Activated naive CD4-positive, alpha-beta T cell treated with anti-CD3 and anti-CD28 coated beads for 36 hours (primary cell): ENCODE measurements at regions of chr11 and their contacts with region 1.

Region 1: DNA sequence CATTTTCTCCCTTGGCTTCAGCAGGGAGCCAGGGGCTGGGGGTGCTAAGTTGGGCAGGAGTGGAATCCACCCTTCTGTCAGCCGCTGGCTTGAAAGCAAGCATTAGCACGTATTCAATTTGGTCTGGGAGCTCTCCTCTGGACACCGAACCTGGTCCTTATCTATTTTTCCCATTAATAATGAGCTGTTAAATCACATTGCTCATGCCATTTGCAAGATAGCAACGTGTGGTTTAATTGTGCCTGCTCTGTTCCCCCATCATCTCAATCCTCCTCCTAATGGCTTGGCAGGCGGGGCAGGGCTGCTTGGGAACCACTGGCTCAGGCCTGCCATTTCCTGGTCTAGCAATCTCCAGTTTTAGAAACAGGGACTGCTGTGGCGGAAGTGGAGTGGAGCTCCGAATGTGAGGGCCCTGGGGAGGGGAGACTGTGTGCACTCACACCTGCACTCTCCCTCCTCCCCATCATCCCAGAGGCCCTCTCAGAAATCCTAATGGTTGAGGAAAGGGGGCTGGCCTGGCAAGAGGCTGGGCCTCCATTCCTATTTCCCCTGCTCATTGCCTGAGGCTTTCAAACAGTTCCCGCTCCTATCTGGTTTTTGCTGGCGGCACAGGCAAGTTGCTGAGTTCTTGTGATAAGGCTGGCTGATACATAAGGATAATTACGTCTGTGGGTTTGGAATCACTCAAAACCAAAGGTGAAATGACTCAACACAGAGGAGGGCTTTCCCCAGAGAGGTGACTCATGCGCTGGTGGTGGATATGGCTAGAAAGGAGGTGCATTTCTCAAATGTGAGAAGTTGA is 201.2 kb upstream of the E2F8 start:
- DNase-seq: peak; percentile 84
- H3K4me3 Mint-ChIP-seq: no peak overlapping the region
- H3K27ac Mint-ChIP-seq: no peak overlapping the region
- H3K4me1 Mint-ChIP-seq: peaks cover 11% of the 10 kb centered on the region
- H3K27me3 Mint-ChIP-seq: peaks cover 18% of the 10 kb centered on the region

Region 2: DNA sequence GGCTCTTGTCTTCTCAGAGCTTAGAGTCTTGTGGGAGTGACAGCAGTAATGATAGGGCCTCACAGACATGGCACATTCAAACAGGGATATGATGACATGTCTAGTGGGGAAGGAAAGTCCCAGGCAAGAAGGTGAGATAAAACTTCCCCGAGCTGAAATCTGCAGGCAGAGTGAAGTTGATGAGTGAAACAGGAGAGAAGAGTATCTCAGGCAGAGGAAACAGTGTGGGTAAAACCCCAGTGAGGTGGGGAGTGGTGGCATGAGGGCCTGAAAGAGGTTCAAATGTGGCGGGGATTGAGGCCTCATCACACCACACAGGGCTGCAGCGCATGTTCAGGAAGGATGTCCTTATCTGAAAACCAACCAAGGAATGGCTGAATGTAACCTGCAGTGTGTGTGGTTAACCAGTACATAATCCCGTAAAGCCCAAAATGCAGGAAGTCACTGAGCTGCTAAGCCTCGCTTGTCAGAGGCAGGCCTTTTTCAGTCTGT is 47.4 kb before region 1 on chr11:
- CTCF ChIA-PET with region 1: no interaction called
- intact Hi-C with region 1: loop called (anchors 1 kb)
- DNase-seq: peak; percentile 64
- H3K4me3 Mint-ChIP-seq: no peak overlapping the region
- H3K27ac Mint-ChIP-seq: no peak overlapping the region
- H3K4me1 Mint-ChIP-seq: peaks cover 5% of the 10 kb centered on the region
- H3K27me3 Mint-ChIP-seq: peaks cover 5% of the 10 kb centered on the region

Region 3: DNA sequence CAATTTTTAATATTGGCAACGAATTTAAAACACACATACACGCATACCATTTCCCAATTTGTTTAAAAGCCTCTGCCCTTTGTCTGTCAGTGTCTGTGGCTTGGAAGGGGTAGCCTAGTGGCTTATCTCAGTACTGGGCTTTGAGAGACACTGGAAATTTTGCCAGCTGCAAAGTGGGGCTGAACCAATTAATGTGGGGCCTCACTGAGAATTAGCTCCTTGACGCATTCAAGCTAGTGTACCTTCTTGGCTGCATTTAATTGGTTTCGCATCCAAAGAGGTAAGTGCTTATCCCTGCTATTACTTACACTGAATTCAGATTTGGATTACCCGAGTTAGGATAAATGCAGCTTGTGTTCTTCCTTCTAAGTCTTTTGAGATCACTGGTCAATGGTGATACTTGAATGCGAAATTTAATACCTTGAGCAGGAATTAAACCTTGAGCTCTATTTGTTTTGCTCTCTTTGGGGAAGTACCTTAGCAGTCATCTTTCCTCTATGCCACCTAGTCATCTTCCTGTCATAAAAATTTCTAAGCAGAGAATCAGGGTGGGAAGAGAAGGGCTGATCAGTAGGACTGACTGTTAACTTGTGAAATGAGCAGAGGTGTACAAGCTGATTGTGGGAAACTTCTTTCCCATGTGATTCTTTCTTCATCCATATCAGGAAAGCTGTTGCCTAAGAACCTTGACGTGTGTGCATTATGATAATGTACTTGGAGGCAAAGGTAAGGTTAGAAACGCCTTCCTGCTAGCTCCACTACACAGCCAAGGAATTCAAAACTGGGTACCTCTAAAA is 13.5 kb before region 1 on chr11:
- CTCF ChIA-PET with region 1: no interaction called
- intact Hi-C with region 1: loop called (anchors 1 kb)
- DNase-seq: no peak
- H3K4me3 Mint-ChIP-seq: no peak overlapping the region
- H3K27ac Mint-ChIP-seq: no peak overlapping the region
- H3K4me1 Mint-ChIP-seq: no peaks in the 10 kb centered on the region
- H3K27me3 Mint-ChIP-seq: peaks cover 39% of the 10 kb centered on the region